HCT116 (cell line): ENCODE measurements at regions of chr1 and their contacts with region 1.

Region 1: GRCh38 chr1:154183045-154183915 is 8.6 kb downstream of the TPM3 start:
- DNase-seq: peak; percentile 97
- ATAC-seq: peak; percentile 96
- H3K4me3 ChIP-seq: peak overlapping the region; percentile 90 to 98
- H3K27ac ChIP-seq: peak overlapping the region; percentile 78
- H3K4me1 ChIP-seq: peaks cover 19 to 38% of the 10 kb centered on the region in 2 experiments
- H3K27me3 ChIP-seq: no peaks in the 10 kb centered on the region
- CTCF ChIP-seq: no peak
- POLR2A ChIP-seq: peak; percentile 90
- RAD21 ChIP-seq: no peak

Region 2: GRCh38 chr1:154220071-154220969 is 37.0 kb after region 1 on chr1 and contains the start of gene UBAP2L:
- CTCF ChIA-PET with region 1: no interaction called
- POLR2A ChIA-PET with region 1: interaction called, 9 read pairs
- RAD21 ChIA-PET with region 1: no interaction called
- intact Hi-C with region 1: loop called (anchors 1 kb)
- DNase-seq: peak; percentile 98
- ATAC-seq: peak; percentile 91
- H3K4me3 ChIP-seq: peak within 1 kb of the TSS; percentile 81 to 99
- H3K27ac ChIP-seq: peak within 1 kb of the TSS; percentile 90
- H3K4me1 ChIP-seq: peaks cover 8 to 20% of the 10 kb centered on the region in 2 experiments; a peak in 3 of 4 replicates
- H3K27me3 ChIP-seq: no peaks in the 10 kb centered on the region
- CTCF ChIP-seq: no peak
- POLR2A ChIP-seq: peak; percentile 52
- RAD21 ChIP-seq: no peak
- total RNA-seq, gene UBAP2L: 189 TPM

Region 3: GRCh38 chr1:154272217-154272998 is 89.1 kb after region 1 on chr1 and contains the start of gene HAX1:
- CTCF ChIA-PET with region 1: no interaction called
- POLR2A ChIA-PET with region 1: no interaction called
- RAD21 ChIA-PET with region 1: no interaction called
- intact Hi-C with region 1: loop called (anchors 1 kb)
- DNase-seq: peak; percentile 96
- ATAC-seq: peak; percentile 94
- H3K4me3 ChIP-seq: peak within 1 kb of the TSS; percentile 78 to 97
- H3K27ac ChIP-seq: peak within 1 kb of the TSS; percentile 73
- H3K4me1 ChIP-seq: peaks cover 3 to 16% of the 10 kb centered on the region in 2 experiments; a peak in 3 of 4 replicates
- H3K27me3 ChIP-seq: no peaks in the 10 kb centered on the region
- CTCF ChIP-seq: peak; percentile 71 to 92 (median 91)
- POLR2A ChIP-seq: peak; percentile 48
- RAD21 ChIP-seq: peak; percentile 98
- total RNA-seq, gene HAX1: 93.6 TPM